ENCODE measurements at regions of chr9 and their contacts with region 1.

Region 1: GRCh38 chr9:113446323-113446740 is 17.2 kb upstream of the RGS3 start:
- DNase-seq: peak in 3 of 35 experiments; percentile 2 to 66 (median 7)
- ATAC-seq: no peak
- H3K4me3 ChIP-seq: no peak overlapping the region
- H3K4me3 Mint-ChIP-seq: no peak overlapping the region
- H3K27ac ChIP-seq: no peak overlapping the region
- H3K27ac Mint-ChIP-seq: no peak overlapping the region
- H3K4me1 ChIP-seq: no peaks in the 10 kb centered on the region
- H3K4me1 Mint-ChIP-seq: peaks cover 0 to 5% (median 2%) of the 10 kb centered on the region in 3 donors
- H3K27me3 ChIP-seq: peaks cover 0 to 3% of the 10 kb centered on the region in 2 experiments
- H3K27me3 Mint-ChIP-seq: no peaks in the 10 kb centered on the region

Region 2: GRCh38 chr9:113468716-113469448 is 22.6 kb after region 1 on chr9:
- CTCF ChIA-PET with region 1: no interaction called
- POLR2A ChIA-PET with region 1: no interaction called
- DNase-seq: no peak
- ATAC-seq: no peak
- H3K4me3 ChIP-seq: no peak overlapping the region
- H3K4me3 Mint-ChIP-seq: no peak overlapping the region
- H3K27ac ChIP-seq: no peak overlapping the region
- H3K27ac Mint-ChIP-seq: no peak overlapping the region
- H3K4me1 ChIP-seq: no peaks in the 10 kb centered on the region
- H3K4me1 Mint-ChIP-seq: peaks cover 0 to 2% (median 0%) of the 10 kb centered on the region in 3 donors
- H3K27me3 ChIP-seq: no peaks in the 10 kb centered on the region
- H3K27me3 Mint-ChIP-seq: no peaks in the 10 kb centered on the region

Region 3: GRCh38 chr9:113578882-113579282 is 132.6 kb after region 1 on chr9:
- CTCF ChIA-PET with region 1: interaction called, 11 to 17 read pairs
- POLR2A ChIA-PET with region 1: no interaction called
- DNase-seq: peak; percentile 52 to 87 (median 74)
- ATAC-seq: peak; percentile 67 to 78 (median 74)
- H3K4me3 ChIP-seq: peak overlapping the region; percentile 10 to 17
- H3K4me3 Mint-ChIP-seq: peak overlapping the region; percentile 52 to 81 (median 62)
- H3K27ac ChIP-seq: peak overlapping the region; percentile 91
- H3K27ac Mint-ChIP-seq: peak overlapping the region; percentile 98 to 99
- H3K4me1 ChIP-seq: peaks cover 38 to 78% of the 10 kb centered on the region in 2 experiments
- H3K4me1 Mint-ChIP-seq: peaks cover 74 to 88% (median 78%) of the 10 kb centered on the region in 3 donors
- H3K27me3 ChIP-seq: no peaks in the 10 kb centered on the region
- H3K27me3 Mint-ChIP-seq: no peaks in the 10 kb centered on the region

Region 4: DNA sequence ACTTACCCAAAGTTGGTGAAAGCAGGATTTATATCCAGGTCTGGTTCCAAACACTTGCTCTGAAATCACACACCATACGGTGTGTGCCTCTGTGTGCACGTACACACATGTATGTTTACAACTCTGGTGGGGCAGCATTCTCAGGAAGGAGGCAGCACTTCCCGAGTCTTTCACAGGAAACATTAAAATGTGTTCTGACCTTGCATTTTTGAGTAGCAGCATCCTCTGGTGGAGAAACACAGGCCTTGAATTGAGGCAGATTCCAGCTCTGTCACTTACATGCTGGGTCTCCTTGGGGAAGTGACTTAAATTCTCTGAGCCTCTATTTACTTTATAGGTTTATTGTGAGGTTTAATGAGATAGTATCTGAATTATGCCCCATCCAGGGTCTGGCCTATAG is 143.6 kb after region 1 on chr9:
- CTCF ChIA-PET with region 1: interaction called, 15 to 20 read pairs
- POLR2A ChIA-PET with region 1: no interaction called
- DNase-seq: peak in 2 of 35 experiments; percentile 15 to 51
- ATAC-seq: peak in 3 of 4 experiments; percentile 39 to 60 (median 52)
- H3K4me3 ChIP-seq: no peak overlapping the region
- H3K4me3 Mint-ChIP-seq: peak overlapping the region in 1 of 3 donors; percentile 29
- H3K27ac ChIP-seq: peak overlapping the region; percentile 34
- H3K27ac Mint-ChIP-seq: peak overlapping the region; percentile 60 to 85
- H3K4me1 ChIP-seq: peaks cover 0 to 55% of the 10 kb centered on the region in 2 experiments
- H3K4me1 Mint-ChIP-seq: peaks cover 31 to 57% (median 33%) of the 10 kb centered on the region in 3 donors
- H3K27me3 ChIP-seq: no peaks in the 10 kb centered on the region
- H3K27me3 Mint-ChIP-seq: no peaks in the 10 kb centered on the region

Region 5: GRCh38 chr9:113657703-113658544 is 211.6 kb after region 1 on chr9:
- CTCF ChIA-PET with region 1: interaction called, 23 to 29 read pairs
- POLR2A ChIA-PET with region 1: no interaction called
- DNase-seq: peak; percentile 28 to 87 (median 69)
- ATAC-seq: peak; percentile 74 to 91 (median 84)
- H3K4me3 ChIP-seq: no peak overlapping the region
- H3K4me3 Mint-ChIP-seq: no peak overlapping the region
- H3K27ac ChIP-seq: no peak overlapping the region
- H3K27ac Mint-ChIP-seq: peak overlapping the region in 1 of 2 donors; percentile 48
- H3K4me1 ChIP-seq: peaks cover 0 to 8% of the 10 kb centered on the region in 2 experiments
- H3K4me1 Mint-ChIP-seq: peaks cover 0 to 5% (median 0%) of the 10 kb centered on the region in 3 donors
- H3K27me3 ChIP-seq: peaks cover 0 to 17% of the 10 kb centered on the region in 2 experiments
- H3K27me3 Mint-ChIP-seq: peaks cover 9 to 11% of the 10 kb centered on the region in 2 donors

Measured in T-cell (primary cell).